AG04449 (cell line): ENCODE measurements at regions of chrX and their contacts with region 1.

Region 1: DNA sequence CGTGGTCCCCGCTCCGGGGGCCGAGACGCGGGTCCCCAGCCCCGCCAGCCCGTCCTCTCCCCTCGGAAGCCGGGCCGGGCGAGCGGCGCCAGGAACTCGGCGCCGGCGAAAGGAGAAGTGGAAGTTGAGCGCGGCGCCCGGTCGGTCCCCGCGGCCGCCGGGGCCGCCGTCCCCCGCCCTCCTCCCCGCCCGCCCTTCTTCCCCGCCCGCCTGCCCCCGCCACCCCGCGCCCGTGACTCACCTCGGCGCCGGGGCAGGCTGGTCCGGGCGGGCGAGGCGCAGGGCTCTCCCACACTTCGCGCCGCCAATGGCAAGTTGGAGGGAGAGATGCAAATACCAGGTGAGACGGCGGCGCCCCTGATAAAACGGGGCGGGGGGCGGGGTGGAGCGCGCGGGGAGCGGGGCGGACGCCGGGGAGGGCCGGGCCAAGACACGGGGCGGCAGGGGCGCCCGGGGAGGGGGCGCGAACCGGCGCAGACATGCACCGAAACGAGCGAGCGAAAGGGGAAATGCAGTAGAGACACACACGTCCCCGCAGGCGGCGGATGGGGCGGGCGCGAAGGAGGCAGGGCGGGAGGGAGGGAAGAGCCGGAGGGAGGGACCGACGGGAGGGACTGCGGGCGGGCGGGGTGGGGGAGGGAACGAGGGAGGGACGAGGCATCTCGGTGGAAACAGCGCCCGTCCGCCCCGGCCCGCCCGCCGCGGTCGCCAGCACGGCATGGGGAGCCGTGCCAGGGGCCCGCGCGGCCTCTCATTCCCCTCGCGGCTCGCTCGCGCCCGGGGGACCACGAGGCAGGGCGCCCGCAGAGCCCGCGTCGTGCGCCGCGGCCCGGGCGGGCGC is at the start of gene ELF4:
- DNase-seq: no peak
- H3K4me3 ChIP-seq: peak within 1 kb of the TSS; percentile 63
- CTCF ChIP-seq: no peak

Region 2: DNA sequence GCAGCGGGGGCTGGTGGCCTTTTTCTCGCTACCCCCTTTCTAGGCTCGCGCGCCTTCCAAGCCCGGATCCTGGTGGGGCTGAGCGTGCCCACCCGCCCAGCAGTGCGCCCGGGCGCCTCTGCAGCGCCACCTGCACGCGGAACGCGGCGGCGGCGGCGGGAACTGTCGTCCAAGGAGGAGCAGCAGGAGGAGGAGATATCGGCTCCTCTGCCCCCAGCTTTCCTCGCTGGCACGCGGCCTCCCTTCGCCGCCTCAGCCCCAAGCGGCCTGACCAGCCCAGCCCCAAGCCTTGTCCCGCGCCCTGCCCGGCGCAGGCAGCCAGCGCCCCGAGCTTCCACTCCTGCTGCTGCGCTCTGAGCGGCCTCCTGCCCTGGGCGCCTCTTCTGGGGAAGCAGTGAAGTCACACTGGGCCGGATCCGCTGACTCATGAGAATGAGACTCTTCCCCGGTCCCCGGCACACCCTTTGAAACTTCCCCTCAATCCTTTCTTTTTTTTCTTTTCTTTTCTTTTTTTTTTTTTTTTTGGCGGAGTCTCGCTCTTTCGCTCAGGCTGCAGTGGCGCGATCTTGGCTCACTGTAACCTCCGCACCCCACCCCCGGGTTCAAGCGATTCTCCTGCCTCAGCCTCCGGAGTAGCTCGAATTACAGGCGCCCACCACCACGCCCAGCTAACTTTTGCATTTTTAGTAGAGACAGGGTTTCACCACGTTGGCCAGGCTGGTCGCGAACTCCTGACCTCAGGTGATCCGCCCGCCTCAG is 10.3 kb after region 1 on chrX:
- CTCF ChIA-PET with region 1: interaction called, 20 read pairs
- POLR2A ChIA-PET with region 1: interaction called, 3 read pairs
- DNase-seq: no peak
- H3K4me3 ChIP-seq: peak overlapping the region; percentile 41
- CTCF ChIP-seq: peak; percentile 68